Heart right ventricle (tissue), 16 donors: ENCODE measurements at regions of chr19 and their contacts with region 1.

Region 1: GRCh38 chr19:21202865-21203494 is 61.1 kb downstream of the ZNF431 start:
- DNase-seq: peak in 1 of 2 donors; percentile 24
- ATAC-seq: peak in 3 of 8 donors; percentile 28 to 64 (median 51)
- H3K4me3 ChIP-seq: no peak overlapping the region
- H3K27ac ChIP-seq: no peak overlapping the region
- H3K4me1 ChIP-seq: no peaks in the 10 kb centered on the region
- H3K27me3 ChIP-seq: no peaks in the 10 kb centered on the region
- CTCF ChIP-seq: peak; percentile 45 to 79 (median 66)

Region 2: DNA sequence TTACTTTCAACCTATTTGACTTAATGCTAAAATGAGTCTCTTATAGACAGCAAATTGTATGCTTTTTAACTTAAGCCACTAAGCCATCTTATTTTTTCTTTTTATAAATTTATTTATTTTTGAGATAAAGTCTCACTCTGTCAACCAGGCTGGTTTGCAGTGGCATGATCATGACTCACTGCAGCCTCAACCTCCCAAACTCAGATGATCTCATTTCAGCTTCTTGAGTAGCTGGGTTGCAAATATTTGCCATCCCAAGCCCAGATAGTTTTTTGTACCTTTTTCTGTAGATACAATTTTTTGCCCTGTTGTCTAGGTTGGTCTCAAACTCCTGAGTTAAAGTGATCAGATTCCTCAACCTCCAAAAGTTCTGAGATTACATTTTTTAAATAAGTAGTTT is 93.9 kb before region 1 on chr19:
- intact Hi-C with region 1: no loop called
- DNase-seq: no peak
- ATAC-seq: no peak
- H3K4me3 ChIP-seq: no peak overlapping the region
- H3K27ac ChIP-seq: no peak overlapping the region
- H3K4me1 ChIP-seq: no peaks in the 10 kb centered on the region
- H3K27me3 ChIP-seq: no peaks in the 10 kb centered on the region
- CTCF ChIP-seq: no peak

Region 3: DNA sequence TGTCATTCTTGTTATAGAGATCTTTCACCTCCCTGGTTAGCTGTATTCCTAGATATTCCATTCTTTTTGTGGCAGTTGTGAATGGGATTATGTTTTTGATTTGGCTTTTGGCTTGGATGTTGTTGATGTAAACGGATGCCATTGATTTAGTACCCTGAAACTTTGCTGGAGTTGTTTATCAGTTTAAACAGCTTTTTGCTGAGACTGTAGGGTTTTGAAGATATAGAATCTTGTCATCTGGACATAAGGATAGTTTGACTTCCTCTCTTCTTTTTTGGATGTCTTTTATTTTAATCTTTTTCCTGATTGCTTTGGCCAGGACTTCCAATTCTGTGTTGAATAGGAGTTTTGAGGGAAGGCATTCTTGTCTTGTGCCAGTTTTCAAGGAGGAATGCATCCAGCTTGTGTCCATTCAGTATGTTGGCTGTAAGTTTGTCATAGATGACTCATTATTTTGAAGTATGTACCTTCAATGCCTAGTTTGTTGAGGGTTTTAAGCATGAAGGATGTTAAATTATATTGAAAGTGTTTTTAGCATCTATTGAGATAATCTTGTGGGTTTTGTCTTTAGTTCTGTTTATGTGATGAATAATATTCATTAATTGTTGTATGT is 44.4 kb before region 1 on chr19:
- intact Hi-C with region 1: no loop called
- DNase-seq: no peak
- ATAC-seq: no peak
- H3K4me3 ChIP-seq: no peak overlapping the region
- H3K27ac ChIP-seq: no peak overlapping the region
- H3K4me1 ChIP-seq: peaks cover 0 to 9% (median 0%) of the 10 kb centered on the region in 9 donors
- H3K27me3 ChIP-seq: no peaks in the 10 kb centered on the region
- CTCF ChIP-seq: no peak

Region 4: DNA sequence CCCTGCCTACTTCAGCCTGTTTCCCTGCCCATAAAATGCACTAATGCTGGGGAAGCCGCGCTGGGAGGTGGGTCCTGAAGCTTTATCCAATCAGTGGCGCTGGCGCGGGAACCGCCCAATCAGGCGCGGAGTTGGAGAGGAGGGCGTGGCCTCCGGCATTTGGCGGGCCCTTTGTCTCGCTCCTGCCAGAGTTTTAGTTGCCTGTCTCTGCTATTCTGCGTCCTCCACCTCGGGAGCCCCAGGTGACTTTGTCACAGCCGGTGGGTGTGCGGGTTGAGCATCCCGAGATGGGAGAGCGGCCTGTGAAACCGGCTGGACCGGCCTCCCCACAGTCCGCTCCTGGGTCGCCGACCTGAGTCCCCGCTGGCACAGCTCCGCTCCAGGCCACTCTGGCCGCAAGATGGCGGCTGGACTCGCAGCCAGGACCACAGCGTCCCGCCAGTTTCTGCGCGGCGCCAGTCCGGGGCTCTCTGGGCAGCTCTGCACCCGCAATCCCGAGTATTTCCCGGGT is 271.7 kb after region 1 on chr19:
- intact Hi-C with region 1: loop called in 1 of 10 experiments (anchors 10 kb)
- DNase-seq: peak; percentile 80 to 86
- ATAC-seq: peak; percentile 97 to 100 (median 99)
- H3K4me3 ChIP-seq: peak overlapping the region; percentile 8 to 70 (median 58)
- H3K27ac ChIP-seq: no peak overlapping the region
- H3K4me1 ChIP-seq: peaks cover 0 to 13% (median 6%) of the 10 kb centered on the region in 9 donors
- H3K27me3 ChIP-seq: peaks cover 0 to 11% (median 0%) of the 10 kb centered on the region in 7 donors
- CTCF ChIP-seq: peak in 4 of 9 donors; percentile 16 to 35 (median 23)

Region 5: DNA sequence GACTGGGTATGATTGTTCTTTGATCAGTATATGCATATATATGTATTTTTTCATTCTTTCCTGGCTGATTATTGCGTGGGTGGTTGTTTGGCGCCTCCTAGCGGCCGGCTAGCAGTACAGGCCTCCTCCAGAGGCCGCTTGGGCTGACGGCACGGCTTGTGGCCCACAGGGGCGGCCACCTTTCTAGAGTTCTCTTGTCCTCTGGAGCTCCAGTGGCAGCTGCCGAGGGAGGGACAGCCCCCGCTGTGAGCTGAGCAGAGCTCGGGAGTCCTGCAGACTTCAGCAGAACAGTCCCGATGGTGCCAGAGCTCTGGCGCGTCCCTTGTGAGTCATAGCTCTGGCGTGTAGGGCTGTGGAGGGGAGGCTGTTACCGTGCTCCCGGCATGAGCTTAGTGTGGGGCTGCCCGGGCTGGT is 279.9 kb after region 1 on chr19:
- intact Hi-C with region 1: loop called in 9 of 10 experiments (anchors 5 to 10 kb)
- DNase-seq: peak; percentile 28 to 68
- ATAC-seq: peak; percentile 77 to 94 (median 89)
- H3K4me3 ChIP-seq: peak overlapping the region in 2 of 10 donors; percentile 15 to 22
- H3K27ac ChIP-seq: peak overlapping the region in 1 of 10 donors; percentile 31
- H3K4me1 ChIP-seq: no peaks in the 10 kb centered on the region
- H3K27me3 ChIP-seq: no peaks in the 10 kb centered on the region
- CTCF ChIP-seq: peak; percentile 78 to 92 (median 84)